GM12878 (cell line): ENCODE measurements at regions of chr22 and their contacts with region 1.

Region 1: DNA sequence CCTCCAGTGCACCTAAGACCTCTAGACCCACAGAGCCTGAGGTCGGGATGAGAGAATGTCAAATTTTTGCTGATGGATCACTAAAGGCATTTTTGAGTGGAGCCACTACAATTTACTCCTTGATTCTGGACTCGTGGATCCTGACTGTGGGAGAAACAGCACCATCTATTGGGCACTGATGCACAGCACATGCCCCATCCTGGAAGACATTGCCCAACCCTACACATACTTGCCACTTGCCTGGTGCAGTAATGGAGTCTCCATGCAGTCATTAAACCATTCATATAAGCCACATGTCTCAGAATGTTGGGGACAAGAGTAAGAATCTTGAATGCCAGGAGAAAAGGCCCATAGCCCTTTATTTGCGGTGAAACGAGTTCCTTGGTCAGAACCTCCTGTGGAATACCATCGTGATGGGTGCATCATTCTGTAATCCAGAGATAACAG is 103.9 kb downstream of the GGTLC2 start:
- DNase-seq: no peak
- ATAC-seq: peak; percentile 79
- H3K4me3 ChIP-seq: no peak overlapping the region
- H3K27ac ChIP-seq: no peak overlapping the region
- H3K4me1 ChIP-seq: no peaks in the 10 kb centered on the region; the same call in 1 of the 2 replicates
- H3K27me3 ChIP-seq: no peaks in the 10 kb centered on the region
- CTCF ChIP-seq: peak; percentile 47 to 60 (median 56)
- EP300 ChIP-seq: no peak
- POLR2A ChIP-seq: no peak
- RAD21 ChIP-seq: no peak

Region 2: DNA sequence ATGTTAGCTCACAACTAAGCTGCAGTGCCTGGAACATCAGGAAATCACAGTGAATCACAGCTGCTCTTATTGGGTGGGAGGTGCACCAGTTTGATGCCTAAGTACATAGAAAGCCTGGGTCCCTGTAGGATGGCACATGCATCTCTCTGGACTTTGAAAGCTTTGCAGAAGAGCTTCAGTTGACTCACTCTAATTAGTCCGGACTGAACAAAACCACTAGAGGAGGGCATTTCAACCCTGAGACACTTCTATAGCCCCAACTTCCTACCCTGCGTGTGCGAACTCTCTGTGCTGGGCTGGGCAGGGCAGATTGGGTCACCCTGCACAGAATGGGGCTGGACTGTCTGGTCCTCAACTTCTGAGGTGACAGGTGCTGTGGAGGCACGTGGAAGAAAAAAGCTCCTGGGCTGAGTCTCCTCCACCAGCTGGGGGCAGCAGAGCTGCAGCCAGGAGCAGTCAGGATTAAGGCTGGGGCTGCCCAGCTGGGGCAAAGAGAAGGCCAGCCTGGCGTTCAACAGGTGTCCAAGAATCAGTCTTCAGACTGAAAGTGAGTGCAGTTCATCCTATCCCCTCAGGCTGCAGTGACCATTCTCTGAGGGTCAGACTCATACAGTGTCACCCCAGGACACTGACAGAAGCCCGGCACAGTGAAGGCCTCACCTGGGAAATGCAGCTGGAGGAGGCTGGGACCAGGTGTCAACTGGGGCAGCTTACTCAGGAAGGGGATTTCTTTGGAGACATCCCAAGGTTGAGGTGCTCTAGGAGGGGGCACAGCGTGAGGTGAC is 81.8 kb before region 1 on chr22:
- CTCF ChIA-PET with region 1: interaction called, 7 read pairs
- POLR2A ChIA-PET with region 1: no interaction called
- RAD21 ChIA-PET with region 1: interaction called, 14 read pairs
- SMC1A ChIA-PET with region 1: interaction called, 3 read pairs
- in situ Hi-C with region 1: no loop called
- intact Hi-C with region 1: no loop called
- DNase-seq: no peak
- ATAC-seq: peak; percentile 81
- H3K4me3 ChIP-seq: no peak overlapping the region
- H3K27ac ChIP-seq: no peak overlapping the region
- H3K4me1 ChIP-seq: peaks cover 5% of the 10 kb centered on the region; the same call in 1 of the 2 replicates
- H3K27me3 ChIP-seq: no peaks in the 10 kb centered on the region
- CTCF ChIP-seq: peak; percentile 44 to 67 (median 63)
- EP300 ChIP-seq: no peak
- POLR2A ChIP-seq: no peak
- RAD21 ChIP-seq: peak; percentile 72

Region 3: GRCh38 chr22:22702237-22703202 is 45.8 kb before region 1 on chr22:
- CTCF ChIA-PET with region 1: interaction called, 65 read pairs
- POLR2A ChIA-PET with region 1: no interaction called
- RAD21 ChIA-PET with region 1: interaction called, 5 read pairs
- SMC1A ChIA-PET with region 1: interaction called, 5 read pairs
- in situ Hi-C with region 1: no loop called
- intact Hi-C with region 1: no loop called
- DNase-seq: no peak
- ATAC-seq: peak; percentile 68; the same call in 2 of the 3 replicates
- H3K4me3 ChIP-seq: no peak overlapping the region
- H3K27ac ChIP-seq: no peak overlapping the region
- H3K4me1 ChIP-seq: no peaks in the 10 kb centered on the region
- H3K27me3 ChIP-seq: no peaks in the 10 kb centered on the region
- CTCF ChIP-seq: peak; percentile 18 to 48 (median 27)
- EP300 ChIP-seq: no peak
- POLR2A ChIP-seq: no peak
- RAD21 ChIP-seq: no peak

Region 4: GRCh38 chr22:22720201-22720723 is 28.1 kb before region 1 on chr22:
- CTCF ChIA-PET with region 1: interaction called, 115 read pairs
- POLR2A ChIA-PET with region 1: interaction called, 6 read pairs
- RAD21 ChIA-PET with region 1: interaction called, 32 read pairs
- SMC1A ChIA-PET with region 1: interaction called, 40 read pairs
- in situ Hi-C with region 1: no loop called
- intact Hi-C with region 1: loop called (anchors 1 kb)
- DNase-seq: peak; percentile 57
- ATAC-seq: peak; percentile 84
- H3K4me3 ChIP-seq: no peak overlapping the region
- H3K27ac ChIP-seq: peak overlapping the region; percentile 82
- H3K4me1 ChIP-seq: peaks cover 5% of the 10 kb centered on the region; the same call in 1 of the 2 replicates
- H3K27me3 ChIP-seq: no peaks in the 10 kb centered on the region
- CTCF ChIP-seq: peak; percentile 39 to 48 (median 46); a peak in 5 of 6 replicates
- EP300 ChIP-seq: no peak
- POLR2A ChIP-seq: no peak
- RAD21 ChIP-seq: no peak

Region 5: DNA sequence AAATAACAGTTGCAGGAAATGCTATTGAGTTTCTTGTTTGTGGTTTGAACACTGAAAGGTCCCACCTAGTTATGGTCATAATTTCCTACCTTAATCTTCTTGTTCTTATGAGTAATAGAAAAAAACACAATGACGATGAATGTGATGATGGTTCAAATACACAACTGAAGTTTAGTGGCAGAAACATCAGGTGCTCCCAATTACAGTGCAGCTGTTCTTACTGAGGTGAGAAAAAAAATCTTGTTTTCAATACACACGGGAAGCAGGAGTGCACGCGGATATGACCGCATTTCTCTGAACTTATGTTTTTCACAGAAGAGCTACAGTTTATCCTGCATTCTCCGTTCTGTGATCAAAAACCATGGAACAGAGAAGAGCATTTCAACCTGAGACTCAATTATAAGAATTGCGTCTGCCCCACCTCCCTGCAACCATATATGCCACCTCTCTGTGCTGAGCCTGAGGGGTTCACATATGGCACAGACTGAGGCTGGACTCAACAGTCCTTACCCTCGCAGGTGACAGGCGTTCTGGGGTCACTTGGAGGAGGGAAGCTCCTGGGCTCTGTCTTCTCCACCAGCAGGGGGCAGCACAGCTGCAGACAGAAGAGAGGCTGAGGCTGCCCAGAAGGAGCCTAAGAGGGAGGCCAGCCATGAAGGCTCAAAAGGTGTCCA is 39.6 kb after region 1 on chr22:
- CTCF ChIA-PET with region 1: interaction called, 15 read pairs
- POLR2A ChIA-PET with region 1: no interaction called
- RAD21 ChIA-PET with region 1: interaction called, 5 read pairs
- SMC1A ChIA-PET with region 1: interaction called, 7 read pairs
- in situ Hi-C with region 1: no loop called
- intact Hi-C with region 1: loop called (anchors 2 kb)
- DNase-seq: no peak
- ATAC-seq: peak; percentile 92
- H3K4me3 ChIP-seq: no peak overlapping the region
- H3K27ac ChIP-seq: no peak overlapping the region
- H3K4me1 ChIP-seq: no peaks in the 10 kb centered on the region
- H3K27me3 ChIP-seq: no peaks in the 10 kb centered on the region
- CTCF ChIP-seq: peak; percentile 49 to 79 (median 59)
- EP300 ChIP-seq: no peak
- POLR2A ChIP-seq: no peak
- RAD21 ChIP-seq: no peak

Region 6: DNA sequence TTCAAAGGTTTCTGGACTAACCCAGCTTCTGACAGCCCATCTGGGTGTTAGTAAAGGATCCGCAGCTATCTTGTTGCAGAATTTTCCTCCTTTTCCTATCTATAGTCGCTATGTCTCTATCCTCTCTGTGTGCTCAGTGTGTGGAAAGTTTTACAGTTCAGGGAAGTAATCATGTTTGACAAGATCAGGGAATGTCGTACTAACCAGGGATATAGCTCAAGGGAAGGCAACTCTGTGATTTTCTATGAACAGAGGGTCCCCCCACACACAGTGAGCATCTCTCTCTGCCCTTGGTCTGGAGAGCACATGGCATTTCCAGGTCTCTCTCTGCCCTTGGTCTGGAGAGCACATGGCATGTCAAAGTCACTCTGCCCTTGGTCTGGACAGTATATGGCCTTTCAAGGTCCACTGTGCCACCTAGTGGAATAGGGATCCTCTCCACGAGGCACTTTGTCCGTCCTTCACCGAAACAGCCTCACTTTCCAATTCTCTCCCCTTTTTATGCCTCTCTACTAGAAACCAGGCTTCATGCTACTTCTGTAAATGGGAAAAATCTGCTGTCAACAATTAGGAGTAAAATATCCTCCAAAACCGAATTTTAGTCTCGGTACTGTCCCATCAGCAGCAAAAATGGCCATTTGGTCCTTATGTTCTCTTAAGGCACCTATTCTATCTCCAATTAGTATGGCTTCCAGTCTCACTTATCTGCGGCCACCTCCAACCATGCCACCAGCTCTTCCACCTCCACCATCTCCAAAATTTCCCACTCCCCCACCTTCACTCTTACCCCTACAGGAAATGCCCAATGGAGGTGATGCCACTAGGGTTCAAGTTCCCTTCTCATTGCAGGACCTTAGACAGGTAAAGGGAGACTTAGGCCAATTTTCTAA is 228.0 kb after region 1 on chr22:
- CTCF ChIA-PET with region 1: no interaction called
- POLR2A ChIA-PET with region 1: no interaction called
- RAD21 ChIA-PET with region 1: no interaction called
- SMC1A ChIA-PET with region 1: no interaction called
- in situ Hi-C with region 1: no loop called
- intact Hi-C with region 1: no loop called
- DNase-seq: no peak
- ATAC-seq: no peak
- H3K4me3 ChIP-seq: no peak overlapping the region
- H3K27ac ChIP-seq: no peak overlapping the region
- H3K4me1 ChIP-seq: no peaks in the 10 kb centered on the region
- H3K27me3 ChIP-seq: no peaks in the 10 kb centered on the region; a peak in 1 of 4 replicates
- CTCF ChIP-seq: no peak
- EP300 ChIP-seq: no peak
- POLR2A ChIP-seq: no peak
- RAD21 ChIP-seq: no peak